ENCODE measurements at regions of chr2 and their contacts with region 1.

Region 1: DNA sequence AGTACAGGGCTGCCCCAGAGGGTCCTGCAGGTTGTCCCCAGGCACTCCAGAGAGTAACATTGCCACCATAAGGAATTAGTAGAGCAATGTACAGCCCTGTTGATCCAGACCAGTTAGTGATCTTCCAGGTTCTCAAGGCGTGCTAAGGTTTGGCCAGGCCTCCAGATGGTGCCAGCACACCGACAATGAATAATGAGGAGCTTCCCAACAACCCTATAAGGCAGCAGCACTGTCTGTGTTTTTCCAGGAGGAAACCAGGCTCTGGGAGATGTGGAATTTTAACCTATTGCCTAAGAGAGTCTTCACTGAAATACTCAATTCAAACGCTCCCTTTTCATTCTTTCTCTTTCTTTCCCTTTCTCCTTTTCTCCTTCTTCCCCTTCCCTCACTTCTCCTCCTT is 122.1 kb downstream of the MGAT5 start:
- DNase-seq: peak; percentile 39
- ATAC-seq: peak; percentile 55 to 72

Region 2: GRCh38 chr2:134411828-134412638 is 36.1 kb after region 1 on chr2:
- intact Hi-C with region 1: loop called in 1 of 2 experiments (anchors 5 kb)
- DNase-seq: peak; percentile 64
- ATAC-seq: peak; percentile 93 to 96

Region 3: DNA sequence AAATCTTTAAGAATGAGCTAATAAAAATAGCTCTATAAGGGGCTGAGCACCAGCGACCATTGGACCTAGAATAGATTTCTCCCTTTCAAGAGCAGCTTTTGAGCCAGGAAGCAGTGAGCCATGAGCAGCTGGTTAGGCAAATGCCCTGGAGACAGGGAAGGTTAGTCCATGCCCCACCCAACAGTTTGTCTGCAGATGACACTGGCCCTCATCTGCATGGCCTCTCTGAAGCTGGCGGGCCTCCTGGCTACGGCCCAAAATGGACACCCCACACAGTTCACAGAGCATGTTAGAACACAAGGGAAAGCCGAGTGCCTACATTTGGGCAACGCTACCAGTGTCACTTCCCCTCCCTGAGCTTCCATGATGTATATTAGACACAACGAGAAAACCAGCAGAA is 79.0 kb after region 1 on chr2:
- intact Hi-C with region 1: loop called in 1 of 2 experiments (anchors 5 kb)
- DNase-seq: no peak
- ATAC-seq: no peak

Region 4: DNA sequence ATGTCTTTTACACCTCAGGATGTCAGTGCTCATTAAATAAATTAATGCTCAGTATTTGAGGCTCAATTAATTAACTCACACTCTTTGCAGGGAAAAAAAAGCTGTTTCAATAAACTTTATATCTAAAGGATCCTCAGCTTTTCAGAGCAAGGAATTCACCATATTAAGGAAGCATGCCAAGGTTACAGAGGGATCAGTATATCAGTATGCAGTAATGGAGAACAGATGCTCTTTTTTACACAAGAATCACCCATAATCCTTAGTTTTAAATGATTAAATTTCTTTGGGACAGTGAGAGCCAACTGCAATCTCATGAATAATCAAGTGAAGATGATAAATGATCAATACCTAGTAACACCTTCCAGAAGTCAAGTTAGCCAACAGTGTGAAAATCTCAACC is 1475.9 kb after region 1 on chr2:
- intact Hi-C with region 1: no loop called
- DNase-seq: no peak
- ATAC-seq: no peak

Measured in left cardiac atrium (tissue), 4 donors.